ENCODE measurements at regions of chr5 and their contacts with region 1.

Region 1: DNA sequence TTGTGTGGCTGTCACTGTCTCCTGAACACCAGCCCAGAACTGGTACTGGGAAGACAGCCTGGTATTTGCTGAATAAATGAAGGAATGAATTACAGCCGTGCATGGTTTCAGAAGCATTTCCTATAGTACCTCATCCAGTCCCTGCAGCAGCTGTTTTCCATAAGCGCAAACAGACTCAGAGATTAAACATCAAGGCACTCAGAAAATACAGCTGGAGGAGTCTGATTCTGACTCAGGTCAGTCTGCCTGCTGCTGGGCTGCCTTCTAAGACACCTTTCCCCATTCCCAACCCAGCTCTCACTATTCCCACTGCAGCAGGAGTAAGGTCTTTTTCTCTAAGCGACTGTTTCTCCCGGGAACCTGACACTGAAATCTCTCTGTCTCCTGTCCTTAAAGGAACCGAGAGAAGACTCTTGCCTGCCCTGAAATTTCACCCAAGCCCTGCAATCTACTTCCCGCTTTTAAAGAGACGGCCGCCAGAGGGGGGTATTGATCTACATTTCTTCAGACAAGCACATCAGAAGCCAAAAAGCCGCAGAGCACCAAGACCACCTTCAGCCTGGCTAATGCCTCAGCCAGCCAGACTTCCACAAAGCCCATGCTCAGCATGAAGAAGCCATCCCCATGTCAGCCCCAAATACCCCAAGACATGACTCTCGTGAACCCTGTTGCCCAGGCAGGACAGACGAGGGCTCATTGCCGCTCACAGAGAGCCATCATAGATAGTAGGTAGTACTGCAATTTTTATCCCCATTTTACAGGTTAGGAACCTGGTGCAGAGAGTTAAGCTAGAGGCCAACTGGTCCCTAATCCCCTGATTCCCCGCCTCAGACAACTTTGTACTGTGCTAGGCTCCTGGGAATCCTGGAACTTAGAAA is 5.4 kb upstream of the FOXI1 start:
- DNase-seq: peak; percentile 73
- ATAC-seq: peak; percentile 67 to 69

Region 2: GRCh38 chr5:170173235-170173634 is 72.9 kb after region 1 on chr5:
- intact Hi-C with region 1: no loop called
- DNase-seq: no peak
- ATAC-seq: no peak

Region 3: DNA sequence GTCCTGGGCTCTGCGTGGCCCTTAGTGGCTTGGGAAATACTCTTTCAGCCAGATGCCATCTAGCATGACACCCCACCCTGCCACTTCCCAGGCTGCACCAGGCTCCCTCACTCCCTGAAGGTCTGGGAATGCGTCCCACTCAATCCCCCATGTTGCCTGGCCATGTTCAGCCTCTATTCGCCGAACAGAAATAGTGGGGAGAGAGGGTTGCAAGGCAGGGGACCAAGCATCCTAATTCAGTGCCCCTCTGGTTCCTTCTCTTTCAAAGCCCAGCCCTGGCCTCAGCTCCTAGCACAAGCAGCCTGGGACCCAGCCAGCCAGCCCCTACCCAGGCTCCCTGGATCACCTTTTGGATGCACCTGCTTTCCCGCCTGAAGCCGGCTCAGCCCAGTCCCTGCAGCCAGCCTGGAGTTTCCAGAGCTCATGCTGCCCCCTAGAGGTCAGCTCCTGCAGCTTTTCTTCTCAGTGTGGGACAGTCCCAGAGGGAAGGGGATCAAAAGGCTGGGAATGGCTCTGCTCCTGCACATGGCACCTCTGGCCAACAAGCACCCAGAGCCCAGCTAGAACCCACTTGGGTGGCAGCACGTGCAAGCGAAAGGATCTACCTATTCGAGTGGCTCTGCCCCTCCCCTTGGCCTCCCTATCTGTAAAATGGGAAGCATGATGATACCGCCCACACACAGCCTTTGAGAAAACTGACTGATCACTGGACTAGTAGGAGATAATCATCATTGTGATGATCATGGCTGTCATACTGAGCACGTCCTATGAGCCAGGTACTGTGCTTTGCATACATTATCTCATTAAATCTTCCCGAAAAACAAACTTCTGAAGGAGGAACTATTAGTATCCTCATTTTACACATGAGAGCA is 83.7 kb after region 1 on chr5:
- intact Hi-C with region 1: loop called (anchors 1 to 2 kb)
- DNase-seq: peak; percentile 63
- ATAC-seq: peak; percentile 87 to 89

Region 4: GRCh38 chr5:170420780-170421412 is 320.6 kb after region 1 on chr5:
- intact Hi-C with region 1: loop called in 1 of 2 experiments (anchors 5 kb)
- DNase-seq: peak; percentile 65
- ATAC-seq: peak; percentile 76 to 77

Region 5: DNA sequence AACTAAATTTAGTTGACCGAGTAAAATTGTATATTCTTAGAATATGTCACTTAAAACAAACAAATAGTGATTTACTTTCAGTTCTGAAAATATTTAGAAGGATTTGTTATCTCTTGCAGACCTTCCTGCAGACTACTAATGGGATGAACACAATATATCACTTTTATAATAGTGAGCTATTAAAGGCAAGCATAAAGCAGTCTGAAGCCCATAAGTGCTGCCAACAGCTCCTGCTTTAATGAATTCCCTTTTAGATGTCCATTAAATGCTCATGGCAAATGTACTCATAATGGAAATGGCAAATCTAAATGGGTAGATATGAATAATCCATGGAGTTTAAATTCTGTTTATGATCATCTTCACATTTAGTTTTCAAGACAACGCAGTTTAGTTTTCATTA is 931.7 kb after region 1 on chr5:
- intact Hi-C with region 1: no loop called
- DNase-seq: no peak
- ATAC-seq: no peak